GM18951 (cell line): ENCODE measurements at regions of chr19 and their contacts with region 1.

Region 1: GRCh38 chr19:39671738-39672363 is 16.1 kb downstream of the LGALS16 start:
- POLR2A ChIP-seq: no peak

Region 2: GRCh38 chr19:39792999-39793546 is 121.2 kb after region 1 on chr19:
- in situ Hi-C with region 1: no loop called
- POLR2A ChIP-seq: no peak

Region 3: GRCh38 chr19:39846176-39846677 is 174.4 kb after region 1 on chr19 and contains the start of gene FBL:
- in situ Hi-C with region 1: loop called (anchors 10 kb)
- POLR2A ChIP-seq: peak; percentile 93